ENCODE measurements at regions of chr16 and their contacts with region 1.

Region 1: GRCh38 chr16:85114909-85115567 is 2.8 kb upstream of the CIBAR2 start:
- H3K4me3 Mint-ChIP-seq: peak overlapping the region; percentile 67
- H3K27ac Mint-ChIP-seq: peak overlapping the region; percentile 84
- H3K4me1 Mint-ChIP-seq: peaks cover 8% of the 10 kb centered on the region
- H3K27me3 Mint-ChIP-seq: peaks cover 3% of the 10 kb centered on the region

Region 2: GRCh38 chr16:85137323-85138072 is 22.5 kb after region 1 on chr16:
- intact Hi-C with region 1: loop called (anchors 2 kb)
- H3K4me3 Mint-ChIP-seq: peak overlapping the region; percentile 81
- H3K27ac Mint-ChIP-seq: peak overlapping the region; percentile 96
- H3K4me1 Mint-ChIP-seq: peaks cover 68% of the 10 kb centered on the region
- H3K27me3 Mint-ChIP-seq: peaks cover 15% of the 10 kb centered on the region

Region 3: GRCh38 chr16:85162478-85163277 is 47.6 kb after region 1 on chr16:
- intact Hi-C with region 1: no loop called
- H3K4me3 Mint-ChIP-seq: no peak overlapping the region
- H3K27ac Mint-ChIP-seq: no peak overlapping the region
- H3K4me1 Mint-ChIP-seq: peaks cover 32% of the 10 kb centered on the region
- H3K27me3 Mint-ChIP-seq: peaks cover 39% of the 10 kb centered on the region

Region 4: DNA sequence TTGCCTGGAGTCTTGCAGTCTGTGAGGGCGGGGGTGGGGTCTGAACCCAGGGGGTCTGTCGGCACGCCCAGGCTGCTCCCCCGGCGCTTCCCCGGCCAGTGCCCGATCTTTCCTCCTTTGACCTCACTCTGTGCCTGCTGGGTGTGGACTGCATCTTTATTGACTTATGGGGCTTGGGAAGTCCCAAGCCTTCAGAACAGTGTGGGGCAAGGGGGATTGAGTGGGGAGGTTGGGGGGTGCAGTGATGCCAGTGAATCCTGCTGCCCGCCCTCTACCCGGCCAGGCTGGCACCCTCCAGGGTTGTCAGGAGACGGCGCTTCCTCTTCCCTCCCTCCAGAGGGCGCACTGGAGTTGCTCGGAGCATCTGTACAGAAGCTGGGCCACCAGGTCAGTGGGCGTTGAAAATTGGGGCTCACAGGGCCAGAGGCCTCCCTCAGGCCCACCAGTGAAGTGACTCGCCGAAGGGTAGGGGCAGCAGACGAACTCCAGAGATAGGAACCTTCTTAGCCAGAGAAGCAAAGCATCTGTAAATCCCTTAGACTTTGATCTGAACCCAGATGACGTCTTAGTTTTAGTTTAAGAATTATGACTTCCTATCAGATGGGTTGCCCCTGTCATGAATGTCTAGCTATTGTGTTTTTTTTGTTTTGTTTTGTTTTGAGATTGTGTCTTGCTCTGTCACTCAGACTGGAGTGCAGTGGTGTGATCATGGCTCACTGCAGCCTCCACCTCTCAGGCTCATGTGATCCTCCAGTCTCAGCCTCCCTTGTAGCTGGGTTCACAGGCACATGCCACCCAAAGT is 182.0 kb after region 1 on chr16:
- intact Hi-C with region 1: loop called (anchors 10 kb)
- H3K4me3 Mint-ChIP-seq: no peak overlapping the region
- H3K27ac Mint-ChIP-seq: no peak overlapping the region
- H3K4me1 Mint-ChIP-seq: no peaks in the 10 kb centered on the region
- H3K27me3 Mint-ChIP-seq: peaks cover 31% of the 10 kb centered on the region